H1 (cell line): ENCODE measurements at regions of chr22 and their contacts with region 1.

Region 1: DNA sequence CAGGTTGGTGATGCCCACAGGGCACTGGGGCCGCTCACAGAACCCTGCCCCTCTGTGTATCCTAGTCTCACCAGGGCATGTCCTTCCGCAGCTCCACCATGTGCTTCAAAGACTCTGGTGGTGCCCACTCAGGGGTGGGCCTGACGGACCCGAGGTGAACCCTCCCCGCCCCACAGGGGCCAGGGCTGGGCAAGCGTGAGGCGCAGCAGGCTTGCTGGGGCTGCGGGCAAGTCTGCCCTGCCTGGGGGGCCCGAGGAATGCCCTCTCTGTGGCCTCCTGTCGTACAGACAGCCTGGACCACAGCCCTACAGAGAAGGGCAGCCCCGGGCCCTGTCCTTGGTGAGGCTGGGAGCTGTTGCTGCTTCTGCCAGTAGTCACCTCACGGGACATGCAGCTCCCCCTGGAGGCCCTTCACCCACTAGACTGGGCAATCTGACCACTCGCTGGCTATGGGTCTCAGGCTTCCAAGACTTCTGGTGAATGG is 40.2 kb downstream of the TBX1 start:
- DNase-seq: no peak
- H3K4me3 ChIP-seq: no peak overlapping the region
- H3K27ac ChIP-seq: no peak overlapping the region
- H3K4me1 ChIP-seq: no peaks in the 10 kb centered on the region; a peak in 1 of 7 replicates
- H3K27me3 ChIP-seq: no peaks in the 10 kb centered on the region
- CTCF ChIP-seq: peak; percentile 46 to 72 (median 69)
- EP300 ChIP-seq: no peak
- POLR2A ChIP-seq: no peak
- RAD21 ChIP-seq: peak; percentile 42 to 51

Region 2: GRCh38 chr22:19787441-19788141 is 13.2 kb before region 1 on chr22:
- CTCF ChIA-PET with region 1: interaction called, 20 read pairs
- POLR2A ChIA-PET with region 1: no interaction called
- DNase-seq: no peak
- H3K4me3 ChIP-seq: no peak overlapping the region
- H3K27ac ChIP-seq: no peak overlapping the region
- H3K4me1 ChIP-seq: peaks cover 0 to 9% (median 0%) of the 10 kb centered on the region in 4 experiments; a peak in 2 of 7 replicates
- H3K27me3 ChIP-seq: no peaks in the 10 kb centered on the region; a peak in 1 of 7 replicates
- CTCF ChIP-seq: peak in 2 of 3 experiments; percentile 5 to 17; a peak in 2 of 4 replicates
- EP300 ChIP-seq: no peak
- POLR2A ChIP-seq: no peak
- RAD21 ChIP-seq: no peak

Region 3: DNA sequence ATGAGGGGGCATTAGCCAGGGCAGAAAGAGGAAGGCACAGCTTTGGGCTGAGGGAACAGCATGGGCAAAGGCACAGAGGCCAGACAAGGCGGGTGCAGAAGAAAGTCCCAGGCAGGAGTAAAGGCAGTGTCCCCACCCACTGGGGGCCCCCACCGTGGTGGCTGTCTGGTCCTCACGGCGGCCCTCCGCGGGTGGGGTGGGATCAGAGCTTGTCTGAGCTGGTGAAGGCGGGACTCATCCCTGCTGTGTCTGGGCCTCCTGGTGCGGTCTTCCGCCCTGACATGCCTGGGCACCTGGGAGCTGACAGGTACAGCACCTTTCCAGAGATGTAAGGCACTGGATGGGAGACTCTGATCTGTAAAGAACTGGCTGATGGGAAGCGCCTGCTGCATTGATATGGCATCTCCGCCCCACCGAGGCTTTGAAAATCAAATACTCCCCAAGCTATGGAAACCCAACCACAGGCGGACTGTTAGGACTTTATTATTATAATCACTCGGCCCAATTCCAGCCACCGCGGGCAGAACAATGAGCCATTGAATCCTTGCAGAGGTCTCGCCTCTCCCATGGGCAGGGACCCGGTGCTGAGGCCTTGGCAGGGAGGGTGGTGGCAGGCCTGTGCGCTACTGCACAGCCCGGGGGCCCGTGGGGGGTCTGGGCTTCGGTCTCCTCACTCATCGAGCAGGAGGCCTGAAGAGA is 68.1 kb after region 1 on chr22:
- CTCF ChIA-PET with region 1: interaction called, 10 read pairs
- POLR2A ChIA-PET with region 1: no interaction called
- DNase-seq: peak in 1 of 2 experiments; percentile 49
- H3K4me3 ChIP-seq: no peak overlapping the region
- H3K27ac ChIP-seq: no peak overlapping the region
- H3K4me1 ChIP-seq: peaks cover 0 to 7% (median 4%) of the 10 kb centered on the region in 4 experiments; a peak in 4 of 7 replicates
- H3K27me3 ChIP-seq: no peaks in the 10 kb centered on the region
- CTCF ChIP-seq: no peak
- EP300 ChIP-seq: no peak
- POLR2A ChIP-seq: no peak
- RAD21 ChIP-seq: no peak